BJ (cell line): ENCODE measurements at regions of chr14 and their contacts with region 1.

Region 1: GRCh38 chr14:52044791-52045611 is 23.9 kb downstream of the NID2 start:
- DNase-seq: peak; percentile 70
- H3K4me3 ChIP-seq: no peak overlapping the region
- H3K27me3 ChIP-seq: no peaks in the 10 kb centered on the region
- CTCF ChIP-seq: no peak

Region 2: DNA sequence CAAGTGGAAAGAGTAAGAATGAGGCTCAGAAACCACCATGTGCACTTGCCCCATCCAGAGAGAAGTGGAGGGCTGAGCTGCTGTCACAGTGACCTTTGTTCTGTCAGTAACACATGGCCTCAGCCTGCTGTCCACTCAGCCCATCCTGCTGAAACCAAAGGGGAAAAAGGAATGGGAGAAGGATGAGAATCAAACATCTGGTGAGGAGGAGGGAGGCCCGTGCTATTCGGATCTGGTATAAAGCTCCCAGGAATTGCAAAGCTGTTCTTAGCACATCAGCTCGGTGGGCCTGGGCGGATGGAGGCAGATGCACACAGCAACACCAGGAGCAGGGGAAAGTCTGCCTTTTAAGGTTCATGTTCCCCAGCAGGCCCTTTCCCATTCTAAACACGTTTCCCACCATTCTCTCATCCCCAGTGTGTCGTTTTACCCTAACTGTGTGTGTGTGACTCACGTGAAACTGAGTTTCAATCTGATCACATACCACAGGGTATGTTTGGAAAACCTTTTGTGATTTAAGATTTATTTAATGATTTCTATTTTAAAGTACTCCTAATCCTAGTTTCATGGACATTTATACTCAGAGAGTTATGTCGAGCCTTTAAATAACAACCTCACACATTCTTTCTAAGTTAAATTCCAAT is 18.9 kb before region 1 on chr14:
- CTCF ChIA-PET with region 1: interaction called, 4 read pairs
- POLR2A ChIA-PET with region 1: interaction called, 17 read pairs
- DNase-seq: no peak
- H3K4me3 ChIP-seq: no peak overlapping the region
- H3K27me3 ChIP-seq: no peaks in the 10 kb centered on the region
- CTCF ChIP-seq: no peak

Region 3: GRCh38 chr14:52033101-52033642 is 11.8 kb before region 1 on chr14:
- CTCF ChIA-PET with region 1: interaction called, 5 read pairs
- POLR2A ChIA-PET with region 1: interaction called, 13 read pairs
- DNase-seq: peak; percentile 82
- H3K4me3 ChIP-seq: no peak overlapping the region
- H3K27me3 ChIP-seq: no peaks in the 10 kb centered on the region
- CTCF ChIP-seq: no peak

Region 4: GRCh38 chr14:52068615-52069303 is 23.8 kb after region 1 on chr14 and contains the start of gene NID2:
- CTCF ChIA-PET with region 1: interaction called, 4 read pairs
- POLR2A ChIA-PET with region 1: interaction called, 12 read pairs
- DNase-seq: no peak
- H3K4me3 ChIP-seq: peak within 1 kb of the TSS; percentile 89
- H3K27me3 ChIP-seq: no peaks in the 10 kb centered on the region
- CTCF ChIP-seq: 0 out of 2 replicates have a peak, but pooled peaks have one; percentile 8
- polyA plus RNA-seq, gene NID2: 253 and 279 TPM in 2 replicates

Region 5: GRCh38 chr14:52235866-52236510 is 191.0 kb after region 1 on chr14:
- CTCF ChIA-PET with region 1: no interaction called
- POLR2A ChIA-PET with region 1: no interaction called
- DNase-seq: no peak
- H3K4me3 ChIP-seq: no peak overlapping the region
- H3K27me3 ChIP-seq: peaks cover 6% of the 10 kb centered on the region
- CTCF ChIP-seq: no peak